Tibial artery (tissue), 4 donors: ENCODE measurements at regions of chr19 and their contacts with region 1.

Region 1: GRCh38 chr19:54576411-54576976 is 2.9 kb downstream of the LILRA2 start:
- DNase-seq: no peak
- H3K4me3 ChIP-seq: no peak overlapping the region
- H3K27ac ChIP-seq: no peak overlapping the region
- H3K4me1 ChIP-seq: no peaks in the 10 kb centered on the region
- H3K27me3 ChIP-seq: no peaks in the 10 kb centered on the region
- CTCF ChIP-seq: no peak

Region 2: DNA sequence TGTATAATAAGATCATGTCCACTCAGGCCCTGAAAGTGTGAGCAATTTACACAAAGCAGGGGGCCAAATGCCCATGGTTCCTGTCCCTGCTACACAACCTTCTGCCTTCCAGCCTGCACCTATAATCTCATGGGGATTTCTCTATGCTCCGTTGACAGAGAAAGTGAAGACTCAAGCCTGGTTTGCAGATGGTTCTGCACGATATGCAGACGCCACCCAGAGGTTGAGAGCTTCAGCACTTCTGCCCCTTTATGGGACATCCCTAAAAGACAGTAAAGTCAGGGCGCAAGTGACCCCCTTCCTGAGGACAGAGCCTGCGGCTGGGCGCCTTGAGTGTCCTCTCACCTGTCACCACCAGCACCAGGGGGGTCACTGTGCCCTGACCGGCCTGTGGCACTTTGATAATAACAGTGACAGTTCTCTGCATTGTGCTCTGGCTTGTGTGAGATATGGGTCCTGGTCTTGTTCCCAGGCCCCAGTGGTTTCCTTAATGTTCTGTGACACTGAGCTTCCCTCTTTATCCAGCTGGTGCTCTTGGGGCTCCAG is 278.7 kb before region 1 on chr19:
- intact Hi-C with region 1: loop called (anchors 2 kb)
- DNase-seq: no peak
- H3K4me3 ChIP-seq: no peak overlapping the region
- H3K27ac ChIP-seq: no peak overlapping the region
- H3K4me1 ChIP-seq: no peaks in the 10 kb centered on the region
- H3K27me3 ChIP-seq: peaks cover 0 to 6% of the 10 kb centered on the region in 2 donors
- CTCF ChIP-seq: no peak

Region 3: DNA sequence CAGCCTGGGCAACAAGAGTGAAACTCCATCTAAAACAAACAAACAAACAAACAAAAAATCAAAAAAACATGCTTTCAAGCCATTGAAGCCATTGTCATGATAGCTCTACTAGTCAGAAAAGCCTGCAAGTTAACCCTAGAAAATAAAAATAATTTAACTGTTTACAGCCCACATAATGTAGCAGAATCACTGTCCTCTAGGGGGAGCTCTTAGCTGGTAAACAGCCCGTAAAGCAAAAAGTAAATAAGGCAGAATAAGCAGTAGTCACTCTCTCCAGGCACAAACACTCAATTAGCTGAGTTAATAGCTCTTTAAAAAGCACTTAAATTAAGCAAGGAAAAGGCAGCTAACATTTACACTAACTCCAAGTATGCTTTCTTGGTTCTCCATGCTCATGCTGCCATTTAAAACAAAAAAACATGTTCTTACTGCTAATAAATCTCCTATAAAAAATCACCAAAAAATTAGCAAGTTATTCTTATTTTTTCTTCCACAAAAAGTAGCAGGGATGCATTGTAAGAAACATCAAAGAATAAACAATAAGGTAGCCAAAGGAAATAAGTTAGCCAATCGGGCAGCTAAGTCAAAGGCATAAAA is 97.6 kb after region 1 on chr19:
- intact Hi-C with region 1: no loop called
- DNase-seq: no peak
- H3K4me3 ChIP-seq: no peak overlapping the region
- H3K27ac ChIP-seq: no peak overlapping the region
- H3K4me1 ChIP-seq: no peaks in the 10 kb centered on the region
- H3K27me3 ChIP-seq: peaks cover 0 to 11% of the 10 kb centered on the region in 2 donors
- CTCF ChIP-seq: peak in 1 of 2 experiments; percentile 12